B cell (primary cell): ENCODE measurements at regions of chr17 and their contacts with region 1.

Region 1: GRCh38 chr17:42405963-42406495 is 17.0 kb downstream of the CAVIN1 start:
- DNase-seq: peak; percentile 86
- ATAC-seq: peak; percentile 79
- H3K4me3 ChIP-seq: no peak overlapping the region
- H3K4me3 Mint-ChIP-seq: no peak overlapping the region
- H3K27ac ChIP-seq: no peak overlapping the region
- H3K27ac Mint-ChIP-seq: peak overlapping the region; percentile 27
- H3K4me1 ChIP-seq: peaks cover 2 to 16% of the 10 kb centered on the region in 2 donors
- H3K4me1 Mint-ChIP-seq: peaks cover 13% of the 10 kb centered on the region
- H3K27me3 ChIP-seq: peaks cover 0 to 10% (median 2%) of the 10 kb centered on the region in 4 experiments
- H3K27me3 Mint-ChIP-seq: peaks cover 5% of the 10 kb centered on the region
- CTCF ChIP-seq: peak; percentile 89

Region 2: GRCh38 chr17:42312285-42313130 is 93.5 kb before region 1 on chr17:
- CTCF ChIA-PET with region 1: interaction called, 546 read pairs
- POLR2A ChIA-PET with region 1: interaction called, 4 read pairs
- intact Hi-C with region 1: loop called (anchors 2 kb)
- DNase-seq: peak; percentile 87
- ATAC-seq: peak; percentile 72
- H3K4me3 ChIP-seq: peak overlapping the region in 4 of 5 experiments; percentile 29 to 64 (median 44)
- H3K4me3 Mint-ChIP-seq: peak overlapping the region; percentile 66
- H3K27ac ChIP-seq: no peak overlapping the region
- H3K27ac Mint-ChIP-seq: no peak overlapping the region
- H3K4me1 ChIP-seq: peaks cover 44 to 52% of the 10 kb centered on the region in 2 donors
- H3K4me1 Mint-ChIP-seq: peaks cover 51% of the 10 kb centered on the region
- H3K27me3 ChIP-seq: no peaks in the 10 kb centered on the region
- H3K27me3 Mint-ChIP-seq: no peaks in the 10 kb centered on the region
- CTCF ChIP-seq: peak; percentile 76

Region 3: GRCh38 chr17:42394838-42395237 is 11.2 kb before region 1 on chr17:
- CTCF ChIA-PET with region 1: interaction called, 24 read pairs
- POLR2A ChIA-PET with region 1: no interaction called
- intact Hi-C with region 1: no loop called
- DNase-seq: no peak
- ATAC-seq: no peak
- H3K4me3 ChIP-seq: no peak overlapping the region
- H3K4me3 Mint-ChIP-seq: no peak overlapping the region
- H3K27ac ChIP-seq: no peak overlapping the region
- H3K27ac Mint-ChIP-seq: peak overlapping the region; percentile 28
- H3K4me1 ChIP-seq: peaks cover 0 to 17% of the 10 kb centered on the region in 2 donors
- H3K4me1 Mint-ChIP-seq: peaks cover 23% of the 10 kb centered on the region
- H3K27me3 ChIP-seq: no peaks in the 10 kb centered on the region
- H3K27me3 Mint-ChIP-seq: no peaks in the 10 kb centered on the region
- CTCF ChIP-seq: no peak

Region 4: DNA sequence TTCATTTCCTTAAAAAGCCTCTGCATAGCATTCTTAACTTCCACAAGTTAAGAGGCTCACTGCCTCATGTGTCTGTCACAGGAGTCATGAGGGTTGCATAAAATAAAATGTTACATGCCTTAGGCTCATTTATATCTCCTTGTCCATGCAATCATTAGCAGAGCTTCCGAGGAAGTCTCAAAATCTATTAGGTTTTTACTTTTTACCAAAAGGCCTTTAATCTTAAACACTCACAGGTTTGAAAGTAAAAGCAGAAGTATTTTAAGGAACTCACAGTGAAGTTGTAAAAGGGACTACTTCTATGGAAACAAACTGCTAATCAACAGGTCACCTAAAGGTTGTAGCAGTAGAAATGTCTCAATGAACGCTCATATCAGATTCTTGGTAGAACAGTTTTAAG is 47.4 kb after region 1 on chr17:
- CTCF ChIA-PET with region 1: interaction called, 5 read pairs
- POLR2A ChIA-PET with region 1: no interaction called
- intact Hi-C with region 1: loop called (anchors 1 kb)
- DNase-seq: peak; percentile 69
- ATAC-seq: peak; percentile 52
- H3K4me3 ChIP-seq: peak overlapping the region in 1 of 5 experiments; percentile 26
- H3K4me3 Mint-ChIP-seq: peak overlapping the region; percentile 68
- H3K27ac ChIP-seq: peak overlapping the region; percentile 70 to 81
- H3K27ac Mint-ChIP-seq: peak overlapping the region; percentile 82
- H3K4me1 ChIP-seq: peaks cover 56 to 66% of the 10 kb centered on the region in 2 donors
- H3K4me1 Mint-ChIP-seq: peaks cover 54% of the 10 kb centered on the region
- H3K27me3 ChIP-seq: no peaks in the 10 kb centered on the region
- H3K27me3 Mint-ChIP-seq: no peaks in the 10 kb centered on the region
- CTCF ChIP-seq: no peak

Region 5: DNA sequence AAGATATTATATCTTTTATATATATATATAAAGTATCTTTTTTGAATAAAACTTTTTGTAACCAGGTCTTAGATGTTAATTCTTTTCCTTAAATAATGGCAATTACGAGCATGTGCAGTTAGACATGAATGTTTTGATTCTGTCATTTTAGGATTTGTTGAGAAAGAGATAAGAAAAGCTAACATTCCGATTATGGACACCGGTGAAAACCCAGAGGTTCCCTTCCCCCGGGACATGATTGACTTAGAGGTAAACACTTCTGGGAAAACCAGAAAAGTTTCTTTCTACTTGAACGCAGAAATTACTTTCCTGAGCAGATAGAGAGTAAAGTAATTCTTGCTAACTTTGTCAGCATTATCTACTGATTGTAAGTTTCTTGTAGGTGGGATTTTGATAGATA is 61.8 kb after region 1 on chr17:
- CTCF ChIA-PET with region 1: no interaction called
- POLR2A ChIA-PET with region 1: no interaction called
- intact Hi-C with region 1: no loop called
- DNase-seq: no peak
- ATAC-seq: no peak
- H3K4me3 ChIP-seq: no peak overlapping the region
- H3K4me3 Mint-ChIP-seq: no peak overlapping the region
- H3K27ac ChIP-seq: no peak overlapping the region
- H3K27ac Mint-ChIP-seq: no peak overlapping the region
- H3K4me1 ChIP-seq: no peaks in the 10 kb centered on the region
- H3K4me1 Mint-ChIP-seq: peaks cover 3% of the 10 kb centered on the region
- H3K27me3 ChIP-seq: no peaks in the 10 kb centered on the region
- H3K27me3 Mint-ChIP-seq: no peaks in the 10 kb centered on the region
- CTCF ChIP-seq: no peak